ENCODE measurements at regions of chrX and their contacts with region 1.

Region 1: DNA sequence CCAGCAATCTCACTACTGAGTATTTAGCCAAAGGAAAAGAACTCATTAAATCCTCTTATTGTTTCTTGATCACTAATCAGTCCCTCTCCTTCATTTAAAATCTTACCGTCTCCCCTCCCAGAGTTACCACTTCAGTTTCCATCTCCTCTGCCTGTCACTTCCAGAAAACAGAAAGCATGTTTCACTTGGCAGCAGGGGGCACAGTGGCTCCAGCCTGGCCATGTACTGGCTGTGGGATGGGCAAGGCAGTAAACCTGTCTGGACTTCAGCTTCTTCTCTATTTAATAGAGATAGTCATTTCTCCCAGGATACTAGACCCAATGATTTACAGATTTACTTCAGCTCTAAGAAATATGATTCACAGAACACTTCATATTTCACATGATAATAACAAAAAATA is 63.2 kb downstream of the CD40LG start:
- DNase-seq: no peak
- ATAC-seq: no peak
- H3K4me3 ChIP-seq: no peak overlapping the region
- H3K4me3 Mint-ChIP-seq: peak overlapping the region in 2 of 10 donors; percentile 8 to 18
- H3K27ac ChIP-seq: peak overlapping the region; percentile 68
- H3K27ac Mint-ChIP-seq: peak overlapping the region; percentile 6 to 95 (median 84)
- H3K4me1 ChIP-seq: peaks cover 5 to 10% of the 10 kb centered on the region in 2 donors
- H3K4me1 Mint-ChIP-seq: peaks cover 0 to 50% (median 46%) of the 10 kb centered on the region in 7 donors
- H3K27me3 ChIP-seq: no peaks in the 10 kb centered on the region
- H3K27me3 Mint-ChIP-seq: no peaks in the 10 kb centered on the region

Region 2: GRCh38 chrX:136572030-136572429 is 139.1 kb before region 1 on chrX:
- CTCF ChIA-PET with region 1: no interaction called
- POLR2A ChIA-PET with region 1: no interaction called
- intact Hi-C with region 1: no loop called
- DNase-seq: peak in 3 of 9 donors; percentile 1 to 29 (median 6)
- ATAC-seq: no peak
- H3K4me3 ChIP-seq: no peak overlapping the region
- H3K4me3 Mint-ChIP-seq: peak overlapping the region in 3 of 10 donors; percentile 12 to 25 (median 24)
- H3K27ac ChIP-seq: no peak overlapping the region
- H3K27ac Mint-ChIP-seq: peak overlapping the region in 2 of 9 donors; percentile 25 to 59
- H3K4me1 ChIP-seq: peaks cover 4 to 8% of the 10 kb centered on the region in 2 donors
- H3K4me1 Mint-ChIP-seq: peaks cover 0 to 11% (median 9%) of the 10 kb centered on the region in 7 donors
- H3K27me3 ChIP-seq: no peaks in the 10 kb centered on the region
- H3K27me3 Mint-ChIP-seq: no peaks in the 10 kb centered on the region

Region 3: GRCh38 chrX:136747003-136747986 is 36.1 kb after region 1 on chrX:
- CTCF ChIA-PET with region 1: interaction called, 3 read pairs
- POLR2A ChIA-PET with region 1: no interaction called
- intact Hi-C with region 1: loop called (anchors 5 kb)
- DNase-seq: no peak
- ATAC-seq: peak; percentile 61
- H3K4me3 ChIP-seq: no peak overlapping the region
- H3K4me3 Mint-ChIP-seq: peak overlapping the region in 9 of 10 donors; percentile 28 to 74 (median 52)
- H3K27ac ChIP-seq: no peak overlapping the region
- H3K27ac Mint-ChIP-seq: peak overlapping the region; percentile 6 to 91 (median 78)
- H3K4me1 ChIP-seq: peaks cover 16 to 40% of the 10 kb centered on the region in 2 donors
- H3K4me1 Mint-ChIP-seq: peaks cover 42 to 89% (median 86%) of the 10 kb centered on the region in 7 donors
- H3K27me3 ChIP-seq: no peaks in the 10 kb centered on the region
- H3K27me3 Mint-ChIP-seq: no peaks in the 10 kb centered on the region

Region 4: DNA sequence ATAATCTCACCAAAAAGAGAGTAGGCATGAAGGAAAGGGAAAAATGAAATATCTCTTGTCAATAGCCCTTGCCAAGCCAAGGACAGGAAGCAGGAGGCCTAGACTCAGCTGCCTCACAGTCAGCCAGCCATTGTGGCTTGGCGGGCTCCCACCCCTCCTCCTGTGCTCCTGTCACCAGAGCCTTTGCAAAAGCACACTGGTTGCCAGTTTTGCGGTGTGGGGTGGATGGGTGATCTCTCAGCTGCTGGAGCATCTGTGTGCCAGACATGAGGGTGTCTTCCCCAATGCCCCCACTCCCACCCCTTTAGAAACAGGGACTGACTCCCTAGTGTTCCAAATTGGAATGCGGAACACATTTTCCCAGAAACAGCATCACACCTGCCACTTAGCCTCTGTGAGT is 43.5 kb after region 1 on chrX:
- CTCF ChIA-PET with region 1: no interaction called
- POLR2A ChIA-PET with region 1: no interaction called
- intact Hi-C with region 1: loop called (anchors 5 kb)
- DNase-seq: peak in 6 of 9 donors; percentile 19 to 46 (median 36)
- ATAC-seq: peak; percentile 69
- H3K4me3 ChIP-seq: no peak overlapping the region
- H3K4me3 Mint-ChIP-seq: peak overlapping the region in 3 of 10 donors; percentile 18 to 56 (median 39)
- H3K27ac ChIP-seq: no peak overlapping the region
- H3K27ac Mint-ChIP-seq: peak overlapping the region in 5 of 9 donors; percentile 11 to 64 (median 48)
- H3K4me1 ChIP-seq: peaks cover 6 to 33% of the 10 kb centered on the region in 2 donors
- H3K4me1 Mint-ChIP-seq: peaks cover 21 to 88% (median 77%) of the 10 kb centered on the region in 7 donors
- H3K27me3 ChIP-seq: no peaks in the 10 kb centered on the region
- H3K27me3 Mint-ChIP-seq: no peaks in the 10 kb centered on the region

Region 5: DNA sequence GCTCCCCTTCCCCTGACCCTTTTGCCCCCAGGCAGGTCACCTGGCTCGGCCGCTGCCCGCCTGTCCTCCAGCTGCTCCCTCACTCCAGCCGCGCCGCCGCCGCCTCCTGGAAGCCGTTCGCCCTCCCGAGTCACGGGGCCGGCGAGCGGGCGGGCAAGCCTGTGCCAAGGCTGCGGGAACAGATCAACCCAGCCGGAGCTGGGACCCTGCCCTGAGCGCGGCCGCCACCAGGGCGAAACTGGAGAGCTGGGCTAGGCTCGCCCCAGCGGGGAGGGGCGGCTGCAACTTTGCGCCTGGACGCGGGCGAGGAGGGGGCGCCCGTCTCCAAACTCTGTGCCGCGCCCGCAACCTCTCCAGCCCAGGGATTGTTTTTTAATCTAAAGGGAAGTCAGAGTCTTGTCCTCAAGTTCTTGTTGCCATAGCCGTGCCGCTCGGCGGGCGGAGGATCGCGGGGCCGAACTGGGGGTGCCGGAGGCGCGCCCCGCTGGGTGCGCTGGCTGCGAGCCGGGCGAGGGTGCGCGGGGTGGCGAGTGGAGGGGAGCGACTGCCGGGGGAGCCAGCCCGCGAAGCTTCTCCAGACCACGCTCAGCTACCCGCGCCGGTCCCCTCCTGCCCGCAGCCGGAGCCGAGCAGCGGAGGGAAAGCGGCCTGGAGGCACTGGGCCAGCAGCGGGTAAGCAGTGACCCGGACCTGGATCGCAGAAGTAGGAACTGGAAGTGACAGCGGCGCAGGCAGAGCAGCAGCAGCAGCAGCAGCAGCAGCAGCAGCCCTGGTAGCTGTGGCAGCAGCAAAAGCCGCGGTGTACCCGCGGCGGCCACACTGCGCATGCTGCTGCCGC is 56.2 kb after region 1 on chrX:
- CTCF ChIA-PET with region 1: no interaction called
- POLR2A ChIA-PET with region 1: no interaction called
- intact Hi-C with region 1: loop called (anchors 5 kb)
- DNase-seq: peak; percentile 20 to 48 (median 41)
- ATAC-seq: peak; percentile 81
- H3K4me3 ChIP-seq: peak overlapping the region; percentile 61
- H3K4me3 Mint-ChIP-seq: peak overlapping the region; percentile 80 to 90 (median 82)
- H3K27ac ChIP-seq: peak overlapping the region; percentile 66
- H3K27ac Mint-ChIP-seq: peak overlapping the region; percentile 66 to 94 (median 87)
- H3K4me1 ChIP-seq: peaks cover 17 to 46% of the 10 kb centered on the region in 2 donors
- H3K4me1 Mint-ChIP-seq: peaks cover 27 to 81% (median 68%) of the 10 kb centered on the region in 7 donors
- H3K27me3 ChIP-seq: no peaks in the 10 kb centered on the region
- H3K27me3 Mint-ChIP-seq: no peaks in the 10 kb centered on the region

Region 6: DNA sequence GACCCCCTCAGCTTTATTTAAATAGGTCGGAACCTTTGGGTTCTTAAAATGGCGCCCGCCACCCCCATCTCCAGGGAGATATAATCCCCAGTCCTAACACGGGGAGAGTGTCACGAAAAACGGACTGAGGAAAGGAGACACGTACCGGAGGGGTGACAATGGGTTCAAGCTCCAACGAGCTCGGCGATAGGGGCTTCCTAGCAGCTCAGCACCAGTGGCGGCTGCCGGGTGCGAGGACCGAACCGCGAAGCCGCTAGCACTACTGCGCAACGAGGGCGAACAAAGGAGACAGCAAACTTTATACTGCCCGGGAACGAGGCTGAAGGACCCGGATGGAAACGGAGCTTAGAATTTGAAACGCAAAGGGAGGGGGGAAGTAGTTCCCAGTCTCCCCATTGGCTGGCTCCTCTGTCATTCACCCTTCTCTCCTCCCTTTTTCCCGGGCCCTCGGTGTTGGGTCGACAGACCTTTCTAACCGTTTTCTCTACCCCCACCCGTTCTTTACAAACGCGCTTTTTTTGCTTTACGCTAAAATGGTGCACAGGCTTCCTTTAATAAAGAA is 169.4 kb after region 1 on chrX and contains the start of gene RBMX:
- CTCF ChIA-PET with region 1: no interaction called
- POLR2A ChIA-PET with region 1: interaction called, 5 read pairs
- intact Hi-C with region 1: loop called (anchors 1 to 5 kb)
- DNase-seq: peak; percentile 75 to 92 (median 89)
- ATAC-seq: peak; percentile 94
- H3K4me3 ChIP-seq: peak within 1 kb of the TSS; percentile 87
- H3K4me3 Mint-ChIP-seq: peak within 1 kb of the TSS; percentile 91 to 99 (median 97)
- H3K27ac ChIP-seq: peak within 1 kb of the TSS; percentile 95
- H3K27ac Mint-ChIP-seq: peak within 1 kb of the TSS; percentile 96 to 100 (median 99)
- H3K4me1 ChIP-seq: peaks cover 4 to 9% of the 10 kb centered on the region in 2 donors
- H3K4me1 Mint-ChIP-seq: peaks cover 0 to 33% (median 25%) of the 10 kb centered on the region in 7 donors
- H3K27me3 ChIP-seq: no peaks in the 10 kb centered on the region
- H3K27me3 Mint-ChIP-seq: no peaks in the 10 kb centered on the region
- total RNA-seq, gene RBMX: 204 to 263 (median 259) TPM

Region 7: DNA sequence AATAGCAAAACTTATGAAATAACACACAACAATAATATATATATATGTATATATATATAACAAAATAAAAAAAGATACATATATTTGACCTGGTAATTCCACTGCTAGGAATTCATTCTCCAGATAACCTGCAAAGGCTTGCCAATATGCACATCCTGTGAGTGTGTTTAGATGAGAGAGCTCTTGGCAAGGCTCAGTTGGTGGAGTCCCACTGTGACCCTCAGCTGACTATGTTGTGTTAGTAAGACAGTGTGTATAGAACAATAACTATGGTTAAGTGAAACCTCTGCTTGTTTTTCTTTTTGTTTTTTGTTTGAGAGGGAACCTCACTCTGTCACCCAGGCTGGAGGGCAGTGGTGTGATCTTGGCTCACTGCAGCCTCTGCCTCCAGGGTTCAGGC is 208.9 kb after region 1 on chrX:
- CTCF ChIA-PET with region 1: interaction called, 9 read pairs
- POLR2A ChIA-PET with region 1: interaction called, 3 read pairs
- intact Hi-C with region 1: loop called in 1 of 2 experiments (anchors 1 kb)
- DNase-seq: no peak
- ATAC-seq: no peak
- H3K4me3 ChIP-seq: no peak overlapping the region
- H3K4me3 Mint-ChIP-seq: no peak overlapping the region
- H3K27ac ChIP-seq: no peak overlapping the region
- H3K27ac Mint-ChIP-seq: no peak overlapping the region
- H3K4me1 ChIP-seq: no peaks in the 10 kb centered on the region
- H3K4me1 Mint-ChIP-seq: peaks cover 0 to 2% (median 2%) of the 10 kb centered on the region in 7 donors
- H3K27me3 ChIP-seq: no peaks in the 10 kb centered on the region
- H3K27me3 Mint-ChIP-seq: no peaks in the 10 kb centered on the region

Region 8: DNA sequence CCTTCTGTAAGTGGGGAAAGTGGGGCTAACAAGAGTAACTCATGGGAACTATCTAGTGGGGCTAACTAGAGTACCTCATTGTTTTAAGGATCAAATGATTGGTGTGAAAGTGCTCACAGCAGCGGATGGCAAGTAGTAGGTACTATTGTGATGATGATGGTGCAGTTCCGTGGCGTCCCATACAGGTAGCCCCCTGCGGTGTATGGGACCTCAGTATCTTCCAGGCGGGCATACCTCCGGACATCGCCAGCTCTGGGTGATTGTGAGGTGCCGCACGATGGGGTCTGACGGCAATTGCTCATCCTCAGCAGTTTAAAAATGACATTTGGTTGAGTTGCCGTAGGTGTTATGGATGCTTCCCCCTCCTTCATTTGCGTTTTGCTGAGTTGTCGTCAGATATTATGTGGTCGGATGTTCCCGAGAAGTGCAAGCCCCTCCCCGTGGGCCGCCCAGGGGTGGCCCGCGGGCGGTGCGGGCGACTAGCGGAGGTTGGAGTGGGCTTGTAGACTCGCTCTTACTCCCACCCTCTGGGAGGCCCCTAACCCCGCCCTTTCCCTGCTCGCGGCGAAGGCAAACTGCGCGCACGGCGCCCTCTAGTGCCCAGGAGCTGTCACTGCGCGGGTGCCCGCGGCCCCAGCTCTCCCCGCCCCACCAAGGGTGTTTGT is 341.0 kb after region 1 on chrX:
- CTCF ChIA-PET with region 1: no interaction called
- POLR2A ChIA-PET with region 1: no interaction called
- intact Hi-C with region 1: loop called in 1 of 2 experiments (anchors 10 kb)
- DNase-seq: peak; percentile 65 to 81 (median 77)
- ATAC-seq: peak; percentile 99
- H3K4me3 ChIP-seq: peak overlapping the region; percentile 68
- H3K4me3 Mint-ChIP-seq: peak overlapping the region; percentile 85 to 93 (median 91)
- H3K27ac ChIP-seq: no peak overlapping the region
- H3K27ac Mint-ChIP-seq: peak overlapping the region in 5 of 9 donors; percentile 21 to 63 (median 45)
- H3K4me1 ChIP-seq: no peaks in the 10 kb centered on the region
- H3K4me1 Mint-ChIP-seq: peaks cover 0 to 15% (median 4%) of the 10 kb centered on the region in 7 donors
- H3K27me3 ChIP-seq: no peaks in the 10 kb centered on the region
- H3K27me3 Mint-ChIP-seq: peaks cover 10 to 50% (median 13%) of the 10 kb centered on the region in 5 donors

Region 9: DNA sequence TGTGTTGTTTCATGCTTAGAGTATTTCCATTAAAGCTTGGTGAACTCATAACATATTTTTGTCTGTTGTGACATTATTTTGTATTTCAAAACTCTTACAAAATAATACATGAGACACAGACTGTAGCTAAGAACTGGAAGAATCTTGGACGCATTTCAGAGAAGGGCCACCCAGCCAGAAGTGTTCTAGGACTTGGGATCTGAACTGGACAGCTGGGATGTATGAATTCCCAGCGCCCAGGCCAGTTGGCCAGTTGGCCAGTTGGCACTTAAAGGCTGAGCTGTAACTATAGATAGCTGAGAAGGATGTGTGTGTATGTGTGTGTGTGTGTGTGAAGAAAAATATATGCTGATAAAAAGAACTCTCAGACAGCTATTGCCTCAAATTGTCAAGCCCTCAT is 516.0 kb after region 1 on chrX:
- CTCF ChIA-PET with region 1: no interaction called
- POLR2A ChIA-PET with region 1: no interaction called
- intact Hi-C with region 1: no loop called
- DNase-seq: no peak
- ATAC-seq: no peak
- H3K4me3 ChIP-seq: no peak overlapping the region
- H3K4me3 Mint-ChIP-seq: no peak overlapping the region
- H3K27ac ChIP-seq: no peak overlapping the region
- H3K27ac Mint-ChIP-seq: no peak overlapping the region
- H3K4me1 ChIP-seq: no peaks in the 10 kb centered on the region
- H3K4me1 Mint-ChIP-seq: peaks cover 0 to 4% (median 2%) of the 10 kb centered on the region in 7 donors
- H3K27me3 ChIP-seq: no peaks in the 10 kb centered on the region
- H3K27me3 Mint-ChIP-seq: no peaks in the 10 kb centered on the region